ENCODE measurements at regions of chr7 and their contacts with region 1.

Region 1: GRCh38 chr7:25389489-25390106 is 161.3 kb upstream of the NPVF start:
- DNase-seq: no peak
- ATAC-seq: no peak
- H3K4me3 ChIP-seq: no peak overlapping the region
- H3K27ac ChIP-seq: no peak overlapping the region
- H3K4me1 ChIP-seq: peaks cover 9% of the 10 kb centered on the region
- H3K27me3 ChIP-seq: no peaks in the 10 kb centered on the region
- CTCF ChIP-seq: peak; percentile 44

Region 2: GRCh38 chr7:25565949-25566348 is 176.4 kb after region 1 on chr7:
- intact Hi-C with region 1: loop called (anchors 10 kb)
- DNase-seq: peak; percentile 60
- ATAC-seq: peak in 1 of 2 donors; percentile 52
- H3K4me3 ChIP-seq: no peak overlapping the region
- H3K27ac ChIP-seq: no peak overlapping the region
- H3K4me1 ChIP-seq: peaks cover 21% of the 10 kb centered on the region
- H3K27me3 ChIP-seq: no peaks in the 10 kb centered on the region
- CTCF ChIP-seq: peak; percentile 100

Region 3: GRCh38 chr7:25770670-25771069 is 381.1 kb after region 1 on chr7:
- intact Hi-C with region 1: no loop called
- DNase-seq: no peak
- ATAC-seq: no peak
- H3K4me3 ChIP-seq: no peak overlapping the region
- H3K27ac ChIP-seq: no peak overlapping the region
- H3K4me1 ChIP-seq: no peaks in the 10 kb centered on the region
- H3K27me3 ChIP-seq: no peaks in the 10 kb centered on the region
- CTCF ChIP-seq: no peak